ENCODE measurements at regions of chr3 and their contacts with region 1.

Region 1: DNA sequence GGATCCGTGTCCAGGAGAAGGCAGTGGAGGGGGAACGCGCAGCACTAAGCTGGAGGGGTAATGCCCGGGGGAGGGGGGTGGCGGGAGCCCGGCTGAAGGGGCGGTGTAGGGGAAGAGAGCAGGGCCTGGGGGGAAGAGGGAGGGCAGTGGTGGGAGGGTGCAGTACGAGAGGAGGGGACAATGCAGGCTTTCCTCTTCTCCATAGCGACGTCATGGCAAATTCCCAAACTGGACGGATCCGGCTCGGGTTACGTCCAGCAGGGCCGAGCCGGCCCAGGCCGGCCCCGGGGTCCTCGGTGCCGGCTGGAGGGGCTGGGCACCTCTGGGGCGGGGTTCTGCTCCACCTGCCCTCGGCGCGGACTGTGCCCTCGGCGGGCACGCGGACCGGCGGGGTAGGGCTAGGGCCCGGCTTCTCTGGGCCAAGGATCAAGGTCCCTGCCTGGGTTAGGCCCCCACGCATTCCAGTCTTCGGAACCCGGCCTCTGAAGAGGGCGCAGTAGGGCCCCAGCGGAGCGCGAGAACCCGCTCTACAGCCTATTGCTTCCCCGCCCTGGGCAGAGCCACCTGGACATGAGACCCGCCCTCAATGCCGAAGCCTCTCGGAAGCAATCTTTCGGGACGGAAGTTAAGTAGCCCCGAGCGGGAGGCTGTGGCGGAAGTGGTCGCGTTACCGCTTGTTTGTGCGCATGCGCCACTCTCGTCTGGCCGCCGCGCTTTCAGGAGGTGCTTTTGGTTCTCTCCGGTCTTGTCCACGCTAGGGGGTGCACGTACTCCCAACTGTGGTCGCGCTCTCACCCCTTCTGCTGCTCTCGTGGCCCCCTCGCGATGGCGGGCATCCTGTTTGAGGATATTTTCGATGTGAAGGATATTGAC is 1.4 kb downstream of the POLR2H start:
- DNase-seq: peak; percentile 96
- H3K4me3 Mint-ChIP-seq: peak overlapping the region; percentile 100
- H3K27ac Mint-ChIP-seq: peak overlapping the region; percentile 99
- H3K4me1 Mint-ChIP-seq: peaks cover 21% of the 10 kb centered on the region
- H3K27me3 Mint-ChIP-seq: peaks cover 10% of the 10 kb centered on the region

Region 2: GRCh38 chr3:183697610-183698317 is 665.1 kb before region 1 on chr3 and contains the start of gene YEATS2:
- intact Hi-C with region 1: loop called (anchors 1 kb)
- DNase-seq: peak; percentile 65
- H3K4me3 Mint-ChIP-seq: peak within 1 kb of the TSS; percentile 88
- H3K27ac Mint-ChIP-seq: peak within 1 kb of the TSS; percentile 94
- H3K4me1 Mint-ChIP-seq: peaks cover 37% of the 10 kb centered on the region
- H3K27me3 Mint-ChIP-seq: no peaks in the 10 kb centered on the region
- total RNA-seq, gene YEATS2: 54.2 and 57.4 TPM in 2 replicates

Region 3: GRCh38 chr3:184135149-184135910 is 227.6 kb before region 1 on chr3 and contains the start of gene EIF2B5:
- intact Hi-C with region 1: loop called (anchors 1 kb)
- DNase-seq: peak; percentile 83
- H3K4me3 Mint-ChIP-seq: peak within 1 kb of the TSS; percentile 92
- H3K27ac Mint-ChIP-seq: peak within 1 kb of the TSS; percentile 85
- H3K4me1 Mint-ChIP-seq: peaks cover 31% of the 10 kb centered on the region
- H3K27me3 Mint-ChIP-seq: no peaks in the 10 kb centered on the region
- total RNA-seq, gene EIF2B5: 75.6 and 75.9 TPM in 2 replicates

Region 4: DNA sequence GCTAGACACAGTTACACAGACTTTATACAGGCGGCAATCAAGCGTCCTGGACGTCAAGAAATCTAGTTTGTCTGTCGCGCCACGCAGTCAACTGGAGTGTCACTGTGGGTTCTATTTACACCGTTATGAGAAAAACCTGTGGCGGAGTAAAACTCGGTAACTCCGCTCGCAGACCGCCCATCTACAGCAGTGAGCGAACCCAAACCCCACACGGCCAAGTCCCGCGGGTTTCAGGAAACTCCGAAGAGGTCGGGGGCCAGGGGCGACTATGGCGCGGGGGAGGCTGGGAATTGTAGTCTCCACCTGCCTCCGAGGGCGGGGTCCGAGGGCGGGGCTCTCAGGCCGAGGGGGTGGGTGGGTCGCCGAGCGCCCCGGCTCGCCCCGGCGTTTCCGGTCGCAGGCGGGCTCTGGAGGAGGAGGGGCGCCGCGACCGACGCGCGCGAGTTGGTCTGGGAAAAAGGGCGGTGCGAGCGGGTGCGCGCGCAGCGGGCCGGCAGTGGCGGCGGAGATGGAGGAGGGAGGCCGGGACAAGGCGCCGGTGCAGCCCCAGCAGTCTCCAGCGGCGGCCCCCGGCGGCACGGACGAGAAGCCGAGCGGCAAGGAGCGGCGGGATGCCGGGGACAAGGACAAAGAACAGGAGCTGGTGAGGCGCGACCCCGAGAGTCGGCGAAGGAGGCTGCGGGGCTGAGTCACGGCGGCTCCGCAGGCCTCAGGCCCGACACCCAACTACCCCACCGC is 64.0 kb before region 1 on chr3 and contains the start of gene PSMD2:
- intact Hi-C with region 1: loop called (anchors 1 kb)
- DNase-seq: peak; percentile 95
- H3K4me3 Mint-ChIP-seq: peak within 1 kb of the TSS; percentile 92
- H3K27ac Mint-ChIP-seq: peak within 1 kb of the TSS; percentile 85
- H3K4me1 Mint-ChIP-seq: peaks cover 23% of the 10 kb centered on the region
- H3K27me3 Mint-ChIP-seq: peaks cover 4% of the 10 kb centered on the region
- total RNA-seq, gene PSMD2: 251 and 255 TPM in 2 replicates

Region 5: GRCh38 chr3:184543843-184544512 is 181.1 kb after region 1 on chr3:
- intact Hi-C with region 1: loop called (anchors 2 kb)
- DNase-seq: peak; percentile 68
- H3K4me3 Mint-ChIP-seq: no peak overlapping the region
- H3K27ac Mint-ChIP-seq: no peak overlapping the region
- H3K4me1 Mint-ChIP-seq: no peaks in the 10 kb centered on the region
- H3K27me3 Mint-ChIP-seq: peaks cover 17% of the 10 kb centered on the region

Region 6: GRCh38 chr3:184811999-184812661 is 449.2 kb after region 1 on chr3 and contains the start of gene VPS8:
- intact Hi-C with region 1: loop called (anchors 1 kb)
- DNase-seq: peak; percentile 96
- H3K4me3 Mint-ChIP-seq: peak within 1 kb of the TSS; percentile 94
- H3K27ac Mint-ChIP-seq: peak within 1 kb of the TSS; percentile 95
- H3K4me1 Mint-ChIP-seq: peaks cover 74% of the 10 kb centered on the region
- H3K27me3 Mint-ChIP-seq: peaks cover 4% of the 10 kb centered on the region
- total RNA-seq, gene VPS8: 37.8 and 40.3 TPM in 2 replicates